A673 (cell line): ENCODE measurements at regions of chr13 and their contacts with region 1.

Region 1: GRCh38 chr13:20828539-20829364 is 55.0 kb upstream of the EEF1AKMT1 start:
- DNase-seq: peak; percentile 85
- H3K4me3 ChIP-seq: peak overlapping the region; percentile 27
- H3K27ac ChIP-seq: no peak overlapping the region
- H3K4me1 ChIP-seq: peaks cover 10% of the 10 kb centered on the region
- H3K27me3 ChIP-seq: no peaks in the 10 kb centered on the region
- CTCF ChIP-seq: peak; percentile 89

Region 2: DNA sequence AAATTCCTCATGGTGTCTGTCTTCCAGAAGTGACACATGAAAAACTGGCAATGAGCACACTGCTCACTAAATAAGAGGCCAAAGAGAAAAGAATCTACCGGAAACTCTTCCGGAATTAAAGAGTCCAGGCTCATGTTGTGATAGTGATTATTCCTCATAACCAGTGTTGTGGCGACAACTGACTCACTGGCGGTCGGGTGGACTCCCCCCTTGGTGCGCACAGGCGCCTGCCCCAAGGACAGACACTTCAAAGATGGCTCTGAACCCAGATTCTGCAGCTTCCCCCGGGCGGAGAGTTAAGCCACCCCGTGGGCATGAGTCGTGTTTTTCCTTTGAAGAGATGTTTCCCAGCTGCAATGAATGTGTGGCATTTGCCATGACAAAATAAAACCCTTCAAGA is 115.0 kb before region 1 on chr13:
- CTCF ChIA-PET with region 1: no interaction called
- POLR2A ChIA-PET with region 1: no interaction called
- intact Hi-C with region 1: loop called (anchors 1 kb)
- DNase-seq: peak; percentile 44
- H3K4me3 ChIP-seq: no peak overlapping the region
- H3K27ac ChIP-seq: no peak overlapping the region
- H3K4me1 ChIP-seq: peaks cover 15% of the 10 kb centered on the region
- H3K27me3 ChIP-seq: no peaks in the 10 kb centered on the region
- CTCF ChIP-seq: no peak

Region 3: DNA sequence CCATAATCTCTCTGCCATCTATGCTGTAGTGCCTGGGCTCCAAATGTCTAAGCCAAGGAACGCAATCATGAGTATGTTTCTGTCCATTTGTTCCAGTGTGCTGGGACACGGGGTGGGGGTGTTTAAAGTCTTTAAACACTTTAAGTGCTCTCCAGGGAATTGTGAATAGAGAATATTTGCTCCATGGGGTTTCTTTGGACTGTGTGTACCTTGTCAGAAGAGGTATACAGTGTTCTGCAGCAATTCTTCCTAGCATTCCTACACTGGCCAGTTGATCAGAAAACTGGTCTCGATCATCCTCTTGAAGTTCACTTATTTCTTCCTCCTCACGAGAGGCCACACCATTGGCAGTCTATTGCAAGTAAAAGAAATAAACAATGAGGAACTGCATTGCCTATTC is 19.9 kb before region 1 on chr13:
- CTCF ChIA-PET with region 1: no interaction called
- POLR2A ChIA-PET with region 1: interaction called, 11 read pairs
- intact Hi-C with region 1: no loop called
- DNase-seq: no peak
- H3K4me3 ChIP-seq: no peak overlapping the region
- H3K27ac ChIP-seq: no peak overlapping the region
- H3K4me1 ChIP-seq: no peaks in the 10 kb centered on the region
- H3K27me3 ChIP-seq: no peaks in the 10 kb centered on the region
- CTCF ChIP-seq: no peak

Region 4: DNA sequence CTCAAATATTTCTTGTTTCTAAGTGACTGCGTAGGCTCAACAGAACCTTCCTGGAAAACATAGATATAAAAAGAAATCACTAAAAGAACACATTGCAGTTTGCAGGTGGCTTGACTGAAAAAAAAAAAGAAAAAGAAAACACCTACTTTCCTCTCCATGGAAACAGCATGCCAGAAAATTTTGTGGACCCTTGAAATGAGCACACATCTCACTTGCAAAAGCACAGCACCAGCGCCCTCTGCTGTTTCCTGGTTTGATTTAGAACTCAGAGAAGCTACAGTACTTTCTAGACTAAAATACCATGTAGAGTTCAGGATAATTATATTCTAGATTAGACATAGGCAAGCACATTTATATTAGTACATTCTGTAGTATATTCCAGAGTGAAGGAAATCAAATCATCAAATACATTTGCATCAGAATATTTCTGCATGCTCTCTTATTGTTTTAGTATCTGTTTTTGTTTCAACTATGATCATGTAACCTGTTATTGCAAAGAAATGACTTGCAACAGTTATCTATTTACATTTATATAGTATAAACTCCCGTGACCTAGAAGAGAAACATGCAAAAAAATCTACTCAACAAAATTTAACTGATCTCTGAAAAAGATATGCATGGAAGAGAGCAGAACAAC is 96.1 kb after region 1 on chr13:
- CTCF ChIA-PET with region 1: interaction called, 3 read pairs
- POLR2A ChIA-PET with region 1: no interaction called
- intact Hi-C with region 1: loop called (anchors 10 kb)
- DNase-seq: peak; percentile 88
- H3K4me3 ChIP-seq: no peak overlapping the region
- H3K27ac ChIP-seq: no peak overlapping the region
- H3K4me1 ChIP-seq: no peaks in the 10 kb centered on the region
- H3K27me3 ChIP-seq: no peaks in the 10 kb centered on the region
- CTCF ChIP-seq: peak; percentile 85